Dendritic cell treated with granulocyte-macrophage colony-stimulating factor and Interleukin-4, amounts not matched to agents 40 ng/mL and 50 ng/mL, for 4 days (primary cell): ENCODE measurements at regions of chr7 and their contacts with region 1.

Region 1: DNA sequence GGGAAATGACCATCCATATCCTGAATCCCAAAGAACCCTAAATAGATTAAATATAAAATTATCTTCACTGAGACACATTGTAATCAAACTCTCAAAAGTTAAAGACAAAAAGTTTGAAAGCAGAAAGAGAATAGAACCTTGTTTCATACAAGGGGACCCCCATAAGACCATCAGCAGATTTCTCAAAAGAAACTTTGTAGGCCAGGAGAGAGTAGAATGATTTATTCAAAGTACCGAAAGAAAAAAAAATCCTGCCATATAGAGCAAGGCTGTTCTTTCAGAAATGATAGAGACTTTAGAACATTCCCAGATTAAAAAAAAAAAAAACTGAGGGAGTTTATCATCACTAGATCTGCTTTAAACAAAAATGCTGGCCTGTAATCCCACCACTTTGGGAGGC is 34.8 kb upstream of the KLF14 start:
- H3K4me3 Mint-ChIP-seq: no peak overlapping the region
- H3K27ac Mint-ChIP-seq: no peak overlapping the region
- H3K4me1 Mint-ChIP-seq: no peaks in the 10 kb centered on the region
- H3K27me3 Mint-ChIP-seq: peaks cover 6% of the 10 kb centered on the region

Region 2: GRCh38 chr7:130650611-130651120 is 118.2 kb before region 1 on chr7:
- intact Hi-C with region 1: loop called (anchors 10 kb)
- H3K4me3 Mint-ChIP-seq: no peak overlapping the region
- H3K27ac Mint-ChIP-seq: no peak overlapping the region
- H3K4me1 Mint-ChIP-seq: peaks cover 26% of the 10 kb centered on the region
- H3K27me3 Mint-ChIP-seq: no peaks in the 10 kb centered on the region

Region 3: DNA sequence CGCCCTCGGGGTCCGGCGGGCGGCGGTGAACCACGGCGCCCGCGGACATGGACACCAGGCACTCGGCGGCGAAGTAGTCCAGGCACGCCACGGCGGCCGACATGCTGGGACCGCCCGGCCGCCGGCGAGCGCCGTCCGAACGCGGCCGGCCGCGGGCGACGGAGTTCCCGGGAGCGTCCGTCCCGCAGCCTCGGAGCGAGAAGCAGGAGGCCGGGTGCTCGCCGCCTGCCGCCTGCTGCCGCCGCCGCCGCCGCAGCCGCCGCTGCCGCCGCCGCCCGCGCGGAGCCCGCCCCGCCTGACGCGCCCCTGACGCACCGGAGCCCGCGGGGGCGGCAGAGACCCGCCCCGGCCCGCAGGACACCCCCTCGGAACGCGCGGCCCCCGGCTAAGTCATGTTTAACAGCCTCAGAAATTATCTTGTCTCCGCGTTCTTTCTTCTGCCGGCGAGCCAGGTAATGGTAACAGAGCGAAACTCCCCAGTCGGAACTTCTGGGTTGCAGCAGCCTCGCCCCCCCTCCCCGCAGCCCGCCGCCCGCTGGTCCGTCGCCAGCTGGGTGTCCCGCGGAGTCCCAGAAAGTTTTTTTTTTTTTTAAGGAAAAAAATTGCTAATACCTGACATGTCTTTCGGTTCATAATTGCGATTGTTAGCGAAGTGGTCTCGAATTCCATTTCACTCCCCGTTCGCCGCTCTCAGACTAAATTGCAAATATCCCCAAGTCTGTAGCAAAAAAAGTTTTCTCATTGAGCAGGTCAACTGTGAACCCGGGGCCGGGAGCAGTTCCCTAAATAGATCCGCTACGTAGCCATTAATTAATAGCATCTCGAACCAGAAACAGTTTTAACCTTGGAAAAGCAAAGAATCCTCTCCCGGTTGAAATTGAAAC is 34.7 kb before region 1 on chr7 and contains the start of gene KLF14:
- intact Hi-C with region 1: no loop called
- H3K4me3 Mint-ChIP-seq: peak within 1 kb of the TSS; percentile 73
- H3K27ac Mint-ChIP-seq: no peak within 1 kb of the TSS
- H3K4me1 Mint-ChIP-seq: peaks cover 6% of the 10 kb centered on the region
- H3K27me3 Mint-ChIP-seq: peaks cover 73% of the 10 kb centered on the region